ENCODE measurements at regions of chr11 and their contacts with region 1.

Region 1: GRCh38 chr11:66289548-66290327 is 795 bp upstream of the YIF1A start:
- DNase-seq: peak; percentile 72 to 83 (median 79)
- ATAC-seq: peak; percentile 45 to 63 (median 56)
- H3K4me3 ChIP-seq: peak overlapping the region; percentile 19 to 100 (median 88)
- H3K27ac ChIP-seq: peak overlapping the region; percentile 57 to 99 (median 96)
- H3K4me1 ChIP-seq: peaks cover 0 to 53% (median 34%) of the 10 kb centered on the region in 12 donors
- H3K27me3 ChIP-seq: peaks cover 6 to 36% (median 26%) of the 10 kb centered on the region in 9 donors
- CTCF ChIP-seq: no peak
- POLR2A ChIP-seq: no peak

Region 2: DNA sequence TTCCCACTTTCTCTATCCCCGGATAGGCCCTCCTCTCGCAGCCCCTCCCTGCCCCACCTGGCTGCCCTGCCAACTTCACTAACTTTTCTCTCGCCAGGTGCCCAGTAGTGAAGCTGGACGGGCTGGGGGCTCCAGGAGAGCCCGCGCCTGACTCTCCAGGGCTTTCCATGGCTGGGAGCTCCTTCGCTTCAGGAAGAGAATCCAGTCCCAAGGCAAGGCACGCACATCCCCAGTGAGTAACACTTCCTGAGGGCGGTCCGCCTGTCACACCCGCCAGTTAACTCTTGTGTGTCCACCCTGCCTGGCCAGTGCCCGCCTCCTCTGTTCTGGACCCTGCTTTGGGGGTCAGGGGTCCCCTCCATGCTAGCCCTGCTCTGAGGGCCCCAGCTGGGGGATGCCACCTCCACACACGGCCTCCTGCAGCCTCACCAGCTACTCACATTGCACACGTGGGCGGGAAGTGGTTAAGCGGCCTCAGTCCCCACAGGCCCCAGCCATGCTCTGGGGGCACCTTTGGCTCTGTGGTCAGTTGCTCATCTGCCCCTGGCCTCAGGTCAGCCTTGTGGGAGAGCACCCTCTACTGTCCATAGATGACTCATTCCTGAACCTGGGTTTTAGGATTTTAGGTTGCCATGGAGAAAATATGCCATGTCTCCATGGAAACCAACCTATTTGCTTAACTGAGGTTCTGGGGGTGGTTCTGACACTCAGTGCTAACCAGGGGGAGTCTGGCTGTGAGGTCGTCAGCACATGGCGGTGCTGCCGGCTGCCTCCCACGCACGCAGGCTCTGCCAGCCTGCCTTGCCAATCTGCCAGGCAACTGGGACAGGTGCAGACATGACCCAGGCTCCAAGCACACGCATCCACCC is 46.7 kb after region 1 on chr11 and contains the start of gene RIN1:
- intact Hi-C with region 1: loop called in 1 of 10 experiments (anchors 5 kb)
- DNase-seq: peak in 4 of 5 donors; percentile 59 to 75 (median 73)
- ATAC-seq: peak; percentile 39 to 89 (median 76)
- H3K4me3 ChIP-seq: peak within 1 kb of the TSS; percentile 36 to 76 (median 65)
- H3K27ac ChIP-seq: peak within 1 kb of the TSS; percentile 15 to 82 (median 72)
- H3K4me1 ChIP-seq: peaks cover 4 to 35% (median 20%) of the 10 kb centered on the region in 12 donors
- H3K27me3 ChIP-seq: no peaks in the 10 kb centered on the region
- CTCF ChIP-seq: peak; percentile 12 to 67 (median 33)
- POLR2A ChIP-seq: no peak
- total RNA-seq, gene RIN1: 0.99 to 5.2 (median 1.5) TPM

Measured in heart left ventricle (tissue), 16 donors.